Tibial artery (tissue), 4 donors: ENCODE measurements at regions of chr2 and their contacts with region 1.

Region 1: DNA sequence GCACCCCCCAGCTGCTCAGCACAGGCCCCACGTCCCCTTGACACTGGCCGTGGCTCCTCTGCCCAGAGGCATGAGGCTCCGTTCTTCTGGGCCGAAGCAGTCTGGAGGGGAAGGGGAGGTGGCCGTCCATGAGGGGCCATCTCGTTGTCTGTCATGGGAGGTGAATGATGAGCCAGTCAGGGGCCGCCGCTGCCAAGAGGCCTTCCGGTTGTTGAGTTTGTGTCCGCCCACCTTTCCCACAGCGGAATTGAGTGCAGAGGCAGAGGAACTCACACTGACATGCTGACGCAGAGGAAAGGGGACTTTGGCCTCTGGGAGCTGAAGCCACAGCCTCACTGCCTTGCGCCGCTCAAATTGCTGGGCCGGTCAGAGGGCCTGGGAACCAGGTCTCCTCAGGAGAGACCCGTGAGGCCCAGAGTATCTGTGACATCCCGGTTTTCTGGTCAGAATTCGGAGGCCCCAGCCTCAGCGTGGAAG is 268.4 kb downstream of the ATAD2B start:
- DNase-seq: no peak
- H3K4me3 ChIP-seq: no peak overlapping the region
- H3K27ac ChIP-seq: no peak overlapping the region
- H3K4me1 ChIP-seq: peaks cover 0 to 19% (median 5%) of the 10 kb centered on the region in 4 donors
- H3K27me3 ChIP-seq: no peaks in the 10 kb centered on the region
- CTCF ChIP-seq: no peak

Region 2: GRCh38 chr2:22930781-22931180 is 727.7 kb before region 1 on chr2:
- intact Hi-C with region 1: loop called (anchors 10 kb)
- DNase-seq: no peak
- H3K4me3 ChIP-seq: no peak overlapping the region
- H3K27ac ChIP-seq: no peak overlapping the region
- H3K4me1 ChIP-seq: no peaks in the 10 kb centered on the region
- H3K27me3 ChIP-seq: no peaks in the 10 kb centered on the region
- CTCF ChIP-seq: no peak

Region 3: GRCh38 chr2:23436346-23437098 is 222.0 kb before region 1 on chr2:
- intact Hi-C with region 1: no loop called
- DNase-seq: peak in 1 of 2 donors; percentile 34
- H3K4me3 ChIP-seq: peak overlapping the region in 1 of 2 donors; percentile 5
- H3K27ac ChIP-seq: peak overlapping the region; percentile 33 to 49
- H3K4me1 ChIP-seq: peaks cover 0 to 15% (median 11%) of the 10 kb centered on the region in 4 donors
- H3K27me3 ChIP-seq: no peaks in the 10 kb centered on the region
- CTCF ChIP-seq: no peak

Region 4: GRCh38 chr2:23756593-23757292 is 98.2 kb after region 1 on chr2:
- intact Hi-C with region 1: no loop called
- DNase-seq: no peak
- H3K4me3 ChIP-seq: no peak overlapping the region
- H3K27ac ChIP-seq: no peak overlapping the region
- H3K4me1 ChIP-seq: no peaks in the 10 kb centered on the region
- H3K27me3 ChIP-seq: no peaks in the 10 kb centered on the region
- CTCF ChIP-seq: no peak